SK-N-SH (cell line): ENCODE measurements at regions of chr2 and their contacts with region 1.

Region 1: DNA sequence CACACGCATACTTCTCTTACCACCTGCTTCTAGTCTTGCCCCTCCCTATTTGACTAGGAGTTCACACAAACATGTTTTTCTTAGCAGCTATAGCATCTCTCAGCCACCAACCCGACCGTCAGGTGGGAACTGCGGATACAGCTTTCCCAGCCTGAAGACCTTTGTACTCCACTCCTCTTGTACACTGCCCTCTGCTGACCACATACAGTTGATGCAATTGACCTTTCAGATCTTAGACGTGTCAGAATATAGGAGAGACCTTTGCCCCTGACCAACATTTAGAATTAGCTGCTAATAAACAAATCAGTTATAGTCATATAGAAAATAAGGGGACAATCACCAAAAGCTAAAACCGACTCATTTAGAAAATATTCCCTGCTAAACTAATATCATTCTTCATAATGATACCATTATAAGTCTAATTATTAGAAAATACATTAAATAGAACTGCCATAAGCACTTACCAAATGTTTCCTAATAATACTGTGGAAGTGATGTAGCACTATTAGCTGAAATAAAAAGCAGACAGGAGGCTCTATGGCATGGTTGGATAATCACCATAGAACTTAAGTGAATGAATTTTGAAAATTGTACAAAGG is 208.4 kb downstream of the RAD51AP2 start:
- DNase-seq: peak; percentile 72
- H3K4me3 ChIP-seq: no peak overlapping the region; a peak in 1 of 4 replicates
- H3K27ac ChIP-seq: no peak overlapping the region
- H3K4me1 ChIP-seq: peaks cover 0 to 6% of the 10 kb centered on the region in 2 experiments; a peak in 2 of 4 replicates
- H3K27me3 ChIP-seq: no peaks in the 10 kb centered on the region
- CTCF ChIP-seq: peak; percentile 93
- EP300 ChIP-seq: no peak; a peak in 1 of 4 replicates
- RAD21 ChIP-seq: peak; percentile 96

Region 2: DNA sequence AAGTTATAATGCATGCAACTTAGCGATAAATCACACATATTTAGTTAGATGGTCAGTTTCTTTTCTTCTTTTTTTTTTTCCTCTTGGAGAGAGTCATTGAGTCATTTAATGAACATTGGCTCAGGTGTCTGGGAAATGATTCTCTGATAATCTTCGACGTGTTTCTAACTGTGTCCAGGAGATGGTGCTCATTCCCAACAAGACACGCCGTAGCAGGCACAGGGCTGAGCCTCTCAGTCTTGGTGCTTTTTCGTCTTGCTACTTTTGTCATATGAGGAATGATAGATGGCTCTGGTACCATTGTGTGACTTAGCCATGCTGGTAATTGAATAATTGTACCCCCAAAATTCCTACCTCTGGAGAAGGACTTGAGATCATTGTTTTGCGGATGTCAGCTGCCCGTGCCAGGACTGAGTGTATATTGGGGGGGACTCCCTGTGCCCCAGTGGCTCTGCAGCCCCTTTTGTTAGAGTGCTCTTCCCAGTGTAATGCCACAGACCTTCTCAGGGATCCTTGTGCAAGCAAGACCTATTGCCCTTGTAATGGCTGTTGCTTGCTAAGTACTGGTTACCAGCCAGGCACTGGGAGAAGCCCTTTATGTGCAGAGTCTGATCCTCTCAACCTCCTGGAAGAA is 536.6 kb before region 1 on chr2:
- CTCF ChIA-PET with region 1: interaction called, 311 read pairs
- POLR2A ChIA-PET with region 1: interaction called, 5 read pairs
- DNase-seq: peak; percentile 67
- H3K4me3 ChIP-seq: no peak overlapping the region; a peak in 1 of 4 replicates
- H3K27ac ChIP-seq: no peak overlapping the region
- H3K4me1 ChIP-seq: peaks cover 0 to 5% of the 10 kb centered on the region in 2 experiments; a peak in 2 of 4 replicates
- H3K27me3 ChIP-seq: no peaks in the 10 kb centered on the region
- CTCF ChIP-seq: peak; percentile 74
- EP300 ChIP-seq: peak in 1 of 2 experiments; percentile 38; a peak in 1 of 4 replicates
- RAD21 ChIP-seq: peak; percentile 100

Region 3: GRCh38 chr2:17148407-17149145 is 161.3 kb before region 1 on chr2:
- CTCF ChIA-PET with region 1: interaction called, 30 read pairs
- POLR2A ChIA-PET with region 1: no interaction called
- DNase-seq: peak; percentile 53
- H3K4me3 ChIP-seq: no peak overlapping the region
- H3K27ac ChIP-seq: no peak overlapping the region
- H3K4me1 ChIP-seq: peaks cover 0 to 8% of the 10 kb centered on the region in 2 experiments; a peak in 1 of 4 replicates
- H3K27me3 ChIP-seq: no peaks in the 10 kb centered on the region
- CTCF ChIP-seq: peak; percentile 60
- EP300 ChIP-seq: no peak; a peak in 1 of 4 replicates
- RAD21 ChIP-seq: peak; percentile 79

Region 4: GRCh38 chr2:17181051-17181752 is 128.6 kb before region 1 on chr2:
- CTCF ChIA-PET with region 1: interaction called, 13 read pairs
- POLR2A ChIA-PET with region 1: no interaction called
- DNase-seq: no peak
- H3K4me3 ChIP-seq: no peak overlapping the region
- H3K27ac ChIP-seq: no peak overlapping the region
- H3K4me1 ChIP-seq: no peaks in the 10 kb centered on the region
- H3K27me3 ChIP-seq: no peaks in the 10 kb centered on the region
- CTCF ChIP-seq: no peak
- EP300 ChIP-seq: no peak
- RAD21 ChIP-seq: no peak

Region 5: DNA sequence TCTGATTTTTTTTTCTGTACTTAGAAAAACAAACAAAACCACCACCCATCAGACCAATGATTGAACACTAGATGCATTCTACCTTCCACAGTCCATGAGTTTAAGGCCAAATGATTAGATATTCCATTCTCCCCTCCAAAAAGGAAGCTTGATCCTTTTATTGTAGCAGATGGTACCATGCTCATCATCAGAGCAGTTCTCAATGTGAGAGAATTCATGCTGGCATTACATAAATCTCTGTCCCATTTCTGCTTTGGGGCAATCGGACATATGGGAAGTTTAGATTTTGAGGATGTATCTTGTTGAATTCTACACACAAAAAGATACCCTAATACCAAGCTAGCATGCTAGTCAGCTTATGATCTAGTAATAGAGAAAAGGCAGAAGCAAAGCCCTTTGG is 21.8 kb after region 1 on chr2:
- CTCF ChIA-PET with region 1: interaction called, 11 read pairs
- POLR2A ChIA-PET with region 1: no interaction called
- DNase-seq: no peak
- H3K4me3 ChIP-seq: no peak overlapping the region
- H3K27ac ChIP-seq: no peak overlapping the region
- H3K4me1 ChIP-seq: no peaks in the 10 kb centered on the region
- H3K27me3 ChIP-seq: no peaks in the 10 kb centered on the region
- CTCF ChIP-seq: no peak
- EP300 ChIP-seq: no peak
- RAD21 ChIP-seq: no peak

Region 6: GRCh38 chr2:17557596-17557995 is 247.8 kb after region 1 on chr2:
- CTCF ChIA-PET with region 1: no interaction called
- POLR2A ChIA-PET with region 1: no interaction called
- DNase-seq: no peak
- H3K4me3 ChIP-seq: no peak overlapping the region
- H3K27ac ChIP-seq: no peak overlapping the region
- H3K4me1 ChIP-seq: no peaks in the 10 kb centered on the region
- H3K27me3 ChIP-seq: no peaks in the 10 kb centered on the region
- CTCF ChIP-seq: no peak
- EP300 ChIP-seq: no peak
- RAD21 ChIP-seq: no peak